ENCODE measurements at regions of chr1 and their contacts with region 1.

Region 1: DNA sequence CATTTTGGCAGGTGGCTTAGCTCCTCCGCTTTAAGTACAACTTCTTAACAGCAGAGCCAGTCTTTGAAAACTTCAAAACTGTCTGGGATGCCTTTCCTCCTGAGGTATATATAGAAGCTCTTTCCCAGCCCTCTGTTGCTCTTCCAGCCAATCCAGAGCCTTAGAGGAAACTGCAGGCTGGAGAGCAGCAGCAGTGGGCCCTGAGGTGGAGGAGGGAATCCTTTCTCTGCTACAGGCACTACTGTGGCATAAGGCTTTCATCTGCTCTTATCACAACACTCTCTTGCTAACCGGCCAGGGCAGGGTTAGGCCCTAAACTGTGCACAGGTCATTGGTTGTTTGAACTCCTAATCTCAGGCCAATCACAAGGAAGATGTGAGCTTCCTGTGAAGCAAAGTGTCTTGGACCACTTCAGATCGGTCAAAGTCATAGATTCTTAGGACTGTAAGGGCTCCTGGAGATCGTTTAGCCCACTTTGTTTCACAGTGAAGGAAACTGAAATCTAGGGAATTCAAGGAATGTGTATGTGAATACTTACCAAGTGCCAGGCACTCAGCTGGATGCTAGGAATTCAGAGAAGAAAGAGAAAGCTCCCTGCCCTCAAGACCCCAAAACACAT is at the start of gene RGS5:
- DNase-seq: peak; percentile 73
- H3K4me3 ChIP-seq: peak within 1 kb of the TSS; percentile 62 to 66
- H3K27ac ChIP-seq: peak within 1 kb of the TSS; percentile 77 to 99
- H3K4me1 ChIP-seq: peaks cover 18 to 25% of the 10 kb centered on the region in 2 experiments; a peak in 3 of 4 replicates
- H3K27me3 ChIP-seq: no peaks in the 10 kb centered on the region
- CTCF ChIP-seq: no peak
- EP300 ChIP-seq: peak in 1 of 2 experiments; percentile 44; a peak in 2 of 4 replicates
- RAD21 ChIP-seq: no peak; the same call in 1 of the 2 replicates
- polyA plus RNA-seq, gene RGS5: 260 and 290 TPM in 2 replicates

Region 2: DNA sequence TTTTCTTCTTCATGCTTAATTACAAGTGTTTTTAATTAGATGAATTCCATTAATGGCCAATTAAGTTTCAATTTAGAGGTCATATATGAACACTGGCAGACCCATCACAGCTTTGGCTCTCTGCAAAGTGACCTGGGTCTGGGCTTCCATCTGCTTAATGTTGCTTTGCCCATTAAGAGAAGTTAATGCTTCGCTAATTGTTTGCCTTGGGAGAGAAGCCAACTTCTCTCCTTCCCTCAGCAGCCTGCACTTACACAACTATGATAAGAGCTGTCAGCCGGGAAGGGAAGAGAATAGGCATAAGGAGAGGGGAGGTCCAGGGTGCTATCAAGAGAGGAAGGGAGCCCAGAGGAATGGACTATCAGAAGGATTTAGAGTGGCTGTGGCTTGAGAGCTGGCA is 313.0 kb before region 1 on chr1:
- CTCF ChIA-PET with region 1: no interaction called
- POLR2A ChIA-PET with region 1: interaction called, 36 read pairs
- DNase-seq: peak; percentile 68
- H3K4me3 ChIP-seq: no peak overlapping the region
- H3K27ac ChIP-seq: peak overlapping the region in 1 of 2 experiments; percentile 100; a peak in 2 of 4 replicates
- H3K4me1 ChIP-seq: peaks cover 0 to 68% of the 10 kb centered on the region in 2 experiments; a peak in 3 of 4 replicates
- H3K27me3 ChIP-seq: no peaks in the 10 kb centered on the region
- CTCF ChIP-seq: no peak
- EP300 ChIP-seq: peak; percentile 51 to 100; a peak in 3 of 4 replicates
- RAD21 ChIP-seq: peak; percentile 52

Region 3: DNA sequence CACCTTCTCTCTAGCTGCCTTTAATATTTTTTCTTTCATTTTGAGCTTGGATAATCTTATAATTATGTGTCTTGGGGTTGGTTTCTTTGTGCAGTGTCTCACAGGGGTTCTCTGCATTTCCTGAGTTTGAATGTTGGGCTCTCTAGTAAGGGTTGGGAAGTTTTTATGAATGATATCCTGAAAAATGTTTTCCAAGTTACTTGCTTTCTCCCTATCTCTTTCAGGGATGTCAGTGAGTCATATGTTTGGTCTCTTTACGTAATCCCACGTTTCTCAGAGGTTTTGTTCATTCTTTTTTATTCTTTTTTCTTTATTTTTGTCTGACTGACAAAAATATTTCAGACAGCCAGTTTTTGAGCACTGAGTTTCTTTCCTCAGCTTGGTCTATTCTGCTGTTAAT is 286.5 kb before region 1 on chr1:
- CTCF ChIA-PET with region 1: no interaction called
- POLR2A ChIA-PET with region 1: interaction called, 25 read pairs
- DNase-seq: no peak
- H3K4me3 ChIP-seq: no peak overlapping the region
- H3K27ac ChIP-seq: peak overlapping the region; percentile 53 to 99
- H3K4me1 ChIP-seq: peaks cover 0 to 34% of the 10 kb centered on the region in 2 experiments; a peak in 2 of 4 replicates
- H3K27me3 ChIP-seq: no peaks in the 10 kb centered on the region
- CTCF ChIP-seq: no peak
- EP300 ChIP-seq: no peak
- RAD21 ChIP-seq: no peak

Region 4: GRCh38 chr1:163186862-163187261 is 16.1 kb before region 1 on chr1:
- CTCF ChIA-PET with region 1: interaction called, 5 read pairs
- POLR2A ChIA-PET with region 1: interaction called, 14 read pairs
- DNase-seq: peak; percentile 54
- H3K4me3 ChIP-seq: no peak overlapping the region
- H3K27ac ChIP-seq: peak overlapping the region in 1 of 2 experiments; percentile 96; a peak in 3 of 4 replicates
- H3K4me1 ChIP-seq: peaks cover 2 to 76% of the 10 kb centered on the region in 2 experiments; a peak in 3 of 4 replicates
- H3K27me3 ChIP-seq: no peaks in the 10 kb centered on the region
- CTCF ChIP-seq: no peak
- EP300 ChIP-seq: peak in 1 of 2 experiments; percentile 88; a peak in 2 of 4 replicates
- RAD21 ChIP-seq: no peak

Region 5: GRCh38 chr1:163213626-163214025 is 10.7 kb after region 1 on chr1:
- CTCF ChIA-PET with region 1: interaction called, 6 read pairs
- POLR2A ChIA-PET with region 1: interaction called, 21 read pairs
- DNase-seq: no peak
- H3K4me3 ChIP-seq: no peak overlapping the region
- H3K27ac ChIP-seq: no peak overlapping the region
- H3K4me1 ChIP-seq: peaks cover 0 to 3% of the 10 kb centered on the region in 2 experiments; a peak in 1 of 4 replicates
- H3K27me3 ChIP-seq: no peaks in the 10 kb centered on the region
- CTCF ChIP-seq: no peak
- EP300 ChIP-seq: no peak
- RAD21 ChIP-seq: no peak

Region 6: GRCh38 chr1:163248064-163248463 is 45.1 kb after region 1 on chr1:
- CTCF ChIA-PET with region 1: interaction called, 6 read pairs
- POLR2A ChIA-PET with region 1: interaction called, 19 read pairs
- DNase-seq: peak; percentile 81
- H3K4me3 ChIP-seq: no peak overlapping the region
- H3K27ac ChIP-seq: peak overlapping the region in 1 of 2 experiments; percentile 98; a peak in 2 of 4 replicates
- H3K4me1 ChIP-seq: peaks cover 0 to 14% of the 10 kb centered on the region in 2 experiments; a peak in 3 of 4 replicates
- H3K27me3 ChIP-seq: no peaks in the 10 kb centered on the region
- CTCF ChIP-seq: no peak
- EP300 ChIP-seq: peak in 1 of 2 experiments; percentile 99; a peak in 2 of 4 replicates
- RAD21 ChIP-seq: no peak; the same call in 1 of the 2 replicates

Region 7: DNA sequence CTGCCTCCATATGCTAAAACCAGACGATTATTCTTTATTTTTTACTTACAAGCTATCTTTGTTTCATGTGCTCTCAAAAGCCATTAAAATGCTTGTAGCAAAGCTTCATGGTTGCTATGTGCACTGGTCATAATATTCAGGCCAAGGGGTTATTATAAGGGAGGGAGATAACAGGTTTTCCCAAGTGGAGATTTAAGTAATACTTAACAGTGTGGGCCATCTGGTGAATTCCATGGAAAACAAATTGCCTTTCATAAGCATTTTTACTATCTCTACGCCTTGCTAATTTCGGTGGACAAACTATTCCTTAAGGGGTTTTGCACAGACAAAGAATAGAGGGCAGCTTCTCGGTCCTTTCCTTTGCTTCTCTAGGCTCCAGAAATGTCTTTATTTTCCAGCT is 256.6 kb after region 1 on chr1:
- CTCF ChIA-PET with region 1: no interaction called
- POLR2A ChIA-PET with region 1: no interaction called
- DNase-seq: no peak
- H3K4me3 ChIP-seq: no peak overlapping the region
- H3K27ac ChIP-seq: no peak overlapping the region; a peak in 1 of 4 replicates
- H3K4me1 ChIP-seq: peaks cover 0 to 10% of the 10 kb centered on the region in 2 experiments; a peak in 1 of 4 replicates
- H3K27me3 ChIP-seq: no peaks in the 10 kb centered on the region
- CTCF ChIP-seq: no peak
- EP300 ChIP-seq: no peak
- RAD21 ChIP-seq: no peak

Measured in SK-N-SH (cell line).